Posterior cingulate gyrus (tissue), 11 donors: ENCODE measurements at regions of chr19 and their contacts with region 1.

Region 1: GRCh38 chr19:35509861-35510625 is 3.4 kb downstream of the DMKN start:
- DNase-seq: peak; percentile 54 to 95 (median 76)

Region 2: DNA sequence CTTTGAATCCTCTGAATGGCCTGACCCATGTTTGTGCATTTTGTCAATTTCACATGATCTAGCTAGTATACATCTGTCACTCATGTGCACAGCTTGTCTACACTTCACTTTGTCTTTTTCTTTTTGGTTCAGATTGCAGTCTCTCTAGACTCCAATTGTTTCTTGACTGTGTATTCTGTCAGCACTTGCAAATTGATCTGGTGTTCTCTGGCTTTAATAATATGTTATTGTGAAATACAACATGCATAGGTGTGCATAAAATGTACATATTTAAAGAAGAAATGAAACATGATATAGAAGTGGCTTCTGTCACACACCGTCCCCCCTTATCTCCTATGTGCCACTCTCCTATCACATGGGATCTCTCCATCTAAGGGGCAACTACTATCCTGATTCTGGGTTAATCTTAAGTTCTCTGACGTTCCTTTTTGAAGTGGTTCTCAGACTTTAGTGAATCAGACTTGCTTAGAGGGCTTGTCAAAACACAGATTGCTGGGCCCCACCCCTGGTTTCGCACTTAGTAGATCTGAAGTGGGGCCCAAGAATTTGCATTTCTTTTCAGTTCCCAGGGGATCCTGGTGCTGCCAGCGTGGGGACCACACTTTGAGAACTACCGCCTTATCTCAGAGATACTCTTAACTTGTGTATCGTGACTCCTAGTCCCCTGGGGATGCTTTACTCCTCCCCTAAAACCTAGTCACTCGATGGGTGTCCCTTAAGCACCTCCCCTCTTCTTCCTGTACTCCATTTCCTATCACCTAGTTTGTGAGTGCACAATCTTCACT is 25.6 kb before region 1 on chr19:
- intact Hi-C with region 1: no loop called
- DNase-seq: no peak

Region 3: GRCh38 chr19:35592226-35592625 is 82.2 kb after region 1 on chr19:
- intact Hi-C with region 1: loop called (anchors 2 kb)
- DNase-seq: peak in 1 of 10 donors; percentile 54

Region 4: GRCh38 chr19:35748106-35749020 is 238.3 kb after region 1 on chr19 and contains the start of gene LIN37:
- intact Hi-C with region 1: no loop called
- DNase-seq: peak; percentile 99 to 100 (median 100)